ENCODE measurements at regions of chr20 and their contacts with region 1.

Region 1: GRCh38 chr20:44576297-44576696 is 6.1 kb upstream of the PKIG start:
- DNase-seq: no peak
- H3K4me3 Mint-ChIP-seq: no peak overlapping the region
- H3K27ac Mint-ChIP-seq: peak overlapping the region; percentile 58
- H3K4me1 Mint-ChIP-seq: peaks cover 37% of the 10 kb centered on the region
- H3K27me3 Mint-ChIP-seq: no peaks in the 10 kb centered on the region

Region 2: DNA sequence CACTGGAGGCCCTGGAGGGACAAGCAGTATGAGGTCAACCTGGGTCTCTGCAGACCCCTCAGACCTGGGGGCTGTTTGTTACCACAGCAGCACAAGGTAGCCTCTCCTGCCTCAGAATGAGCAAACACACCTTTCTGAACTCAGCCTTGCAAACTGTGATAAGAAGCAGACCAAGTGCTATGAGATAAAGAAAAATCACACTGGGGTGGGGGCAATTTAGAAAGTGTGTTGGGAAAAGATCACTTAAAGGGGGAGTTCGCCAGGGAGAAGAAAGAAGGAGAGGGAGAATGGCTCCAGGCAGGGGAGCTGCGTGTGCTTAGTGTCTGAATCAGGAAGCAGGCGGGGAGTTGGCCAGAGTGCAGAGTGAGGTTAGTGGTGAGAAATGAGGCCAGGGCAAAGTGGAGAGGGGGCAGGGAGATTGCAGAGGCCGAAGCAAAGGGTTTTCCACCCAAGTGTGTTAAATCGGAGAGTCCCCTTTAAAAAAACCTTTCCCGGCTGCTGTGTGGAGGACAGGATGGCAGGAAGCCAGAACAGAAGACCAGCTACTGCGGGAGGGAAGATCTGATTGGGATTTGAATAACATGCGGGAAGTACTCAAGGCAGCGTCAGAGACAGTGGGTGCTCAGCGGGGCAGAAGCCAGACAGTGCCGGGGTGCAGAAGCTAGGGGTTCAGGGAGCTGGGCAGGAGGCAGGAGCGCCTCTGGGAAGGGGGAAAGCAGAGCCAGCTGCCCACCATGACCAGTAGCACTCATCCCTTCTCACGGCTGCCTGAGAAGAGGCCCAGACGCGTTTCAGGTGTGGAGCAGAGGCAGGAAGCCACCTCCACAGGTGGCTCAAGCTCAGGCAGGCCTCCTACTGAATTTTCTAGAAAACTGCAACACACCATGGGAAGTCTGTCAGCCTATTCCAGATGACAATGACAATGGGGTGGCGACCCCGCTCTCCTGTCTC is 66.2 kb after region 1 on chr20:
- intact Hi-C with region 1: loop called (anchors 2 kb)
- DNase-seq: no peak
- H3K4me3 Mint-ChIP-seq: peak overlapping the region; percentile 14
- H3K27ac Mint-ChIP-seq: peak overlapping the region; percentile 87
- H3K4me1 Mint-ChIP-seq: peaks cover 60% of the 10 kb centered on the region
- H3K27me3 Mint-ChIP-seq: no peaks in the 10 kb centered on the region

Region 3: DNA sequence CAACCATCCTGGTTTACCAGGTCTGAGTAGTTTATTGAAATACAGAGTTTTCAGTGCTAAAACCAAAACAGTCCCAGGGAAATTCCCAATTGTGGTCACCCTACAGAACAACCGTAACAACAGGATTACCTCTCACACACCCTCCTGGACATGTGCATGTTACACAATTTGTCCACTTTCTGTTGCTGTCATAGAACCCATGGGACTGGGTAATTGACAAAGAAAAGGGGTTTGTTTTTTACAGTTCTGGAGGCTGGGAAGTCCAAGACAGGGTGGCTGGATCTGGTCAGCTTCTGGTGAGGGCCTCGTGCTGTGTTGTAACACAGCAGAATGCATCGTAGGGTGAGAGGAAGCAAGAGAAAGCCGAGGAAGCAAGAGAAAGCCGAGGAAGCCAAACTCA is 84.3 kb after region 1 on chr20:
- intact Hi-C with region 1: no loop called
- DNase-seq: no peak
- H3K4me3 Mint-ChIP-seq: no peak overlapping the region
- H3K27ac Mint-ChIP-seq: no peak overlapping the region
- H3K4me1 Mint-ChIP-seq: peaks cover 6% of the 10 kb centered on the region
- H3K27me3 Mint-ChIP-seq: no peaks in the 10 kb centered on the region

Measured in activated T-helper 2 cell treated with anti-CD3 and anti-CD28 coated beads, Interferon-gamma antibody, Interleukin-2, Interleukin-4, amounts not matched to agents 10 μg/mL and 5 μg/mL and 100 μg/mL, durations not matched to agents 14 hours and 24 hours and 36 hours (primary cell).